ENCODE measurements at regions of chr1 and their contacts with region 1.

Region 1: GRCh38 chr1:92749024-92749634 is 35.8 kb downstream of the EVI5 start:
- DNase-seq: peak; percentile 46 to 59 (median 58)
- H3K4me3 ChIP-seq: no peak overlapping the region
- H3K4me3 Mint-ChIP-seq: no peak overlapping the region
- H3K27ac ChIP-seq: no peak overlapping the region
- H3K27ac Mint-ChIP-seq: no peak overlapping the region
- H3K4me1 ChIP-seq: peaks cover 5 to 8% of the 10 kb centered on the region in 2 donors
- H3K4me1 Mint-ChIP-seq: peaks cover 19% of the 10 kb centered on the region
- H3K27me3 ChIP-seq: no peaks in the 10 kb centered on the region
- H3K27me3 Mint-ChIP-seq: peaks cover 0 to 2% (median 0%) of the 10 kb centered on the region in 3 donors
- CTCF ChIP-seq: peak; percentile 80

Region 2: GRCh38 chr1:92367496-92367895 is 381.6 kb before region 1 on chr1:
- intact Hi-C with region 1: no loop called
- DNase-seq: no peak
- H3K4me3 ChIP-seq: no peak overlapping the region
- H3K4me3 Mint-ChIP-seq: no peak overlapping the region
- H3K27ac ChIP-seq: no peak overlapping the region
- H3K27ac Mint-ChIP-seq: no peak overlapping the region
- H3K4me1 ChIP-seq: no peaks in the 10 kb centered on the region
- H3K4me1 Mint-ChIP-seq: no peaks in the 10 kb centered on the region
- H3K27me3 ChIP-seq: no peaks in the 10 kb centered on the region
- H3K27me3 Mint-ChIP-seq: no peaks in the 10 kb centered on the region
- CTCF ChIP-seq: no peak

Region 3: GRCh38 chr1:92817986-92818764 is 69.0 kb after region 1 on chr1:
- intact Hi-C with region 1: loop called in 1 of 2 experiments (anchors 5 kb)
- DNase-seq: peak; percentile 32 to 57 (median 46)
- H3K4me3 ChIP-seq: no peak overlapping the region
- H3K4me3 Mint-ChIP-seq: no peak overlapping the region
- H3K27ac ChIP-seq: no peak overlapping the region
- H3K27ac Mint-ChIP-seq: peak overlapping the region in 1 of 7 donors; percentile 24
- H3K4me1 ChIP-seq: no peaks in the 10 kb centered on the region
- H3K4me1 Mint-ChIP-seq: peaks cover 11% of the 10 kb centered on the region
- H3K27me3 ChIP-seq: no peaks in the 10 kb centered on the region
- H3K27me3 Mint-ChIP-seq: peaks cover 0 to 9% (median 5%) of the 10 kb centered on the region in 3 donors
- CTCF ChIP-seq: peak; percentile 82

Measured in CD14-positive monocyte (primary cell).